Breast epithelium (tissue), 4 donors: ENCODE measurements at regions of chr20 and their contacts with region 1.

Region 1: DNA sequence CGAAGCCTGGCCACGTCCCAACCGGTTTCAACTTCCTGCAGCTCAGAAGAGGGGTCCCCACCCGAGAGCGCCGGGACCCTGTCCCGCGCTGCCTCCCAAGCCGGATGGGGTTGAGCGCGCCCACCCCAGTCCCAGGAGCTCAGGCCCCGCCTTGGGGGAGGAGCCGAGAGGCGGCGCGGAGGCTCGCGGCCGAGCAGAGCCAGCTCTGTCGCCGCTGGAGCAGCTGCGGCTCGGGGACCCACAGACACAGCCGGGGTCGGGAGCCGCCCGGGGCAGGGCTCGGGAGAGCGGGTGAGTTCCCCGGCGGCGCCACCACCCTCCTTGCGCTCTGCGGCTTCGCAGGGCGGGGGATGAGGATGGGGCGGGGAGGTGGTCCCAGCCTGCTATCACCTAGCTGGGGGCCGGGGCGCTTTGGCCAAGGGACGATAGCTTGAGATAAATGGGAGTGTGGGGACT is at the start of gene PPP1R16B:
- DNase-seq: peak in 1 of 2 donors; percentile 27
- H3K4me3 ChIP-seq: peak within 1 kb of the TSS; percentile 49 to 77 (median 63)
- H3K27ac ChIP-seq: peak within 1 kb of the TSS; percentile 53 to 75
- H3K4me1 ChIP-seq: peaks cover 0 to 9% of the 10 kb centered on the region in 2 donors
- H3K27me3 ChIP-seq: peaks cover 7 to 30% of the 10 kb centered on the region in 2 donors
- CTCF ChIP-seq: no peak
- POLR2A ChIP-seq: no peak
- total RNA-seq, gene PPP1R16B: 3.7 to 10.8 (median 8.2) TPM

Region 2: GRCh38 chr20:38790200-38791053 is 15.1 kb before region 1 on chr20:
- intact Hi-C with region 1: no loop called
- DNase-seq: no peak
- H3K4me3 ChIP-seq: no peak overlapping the region
- H3K27ac ChIP-seq: no peak overlapping the region
- H3K4me1 ChIP-seq: no peaks in the 10 kb centered on the region
- H3K27me3 ChIP-seq: no peaks in the 10 kb centered on the region
- CTCF ChIP-seq: peak; percentile 11 to 46 (median 28)
- POLR2A ChIP-seq: no peak

Region 3: GRCh38 chr20:38838326-38838725 is 32.8 kb after region 1 on chr20:
- intact Hi-C with region 1: loop called (anchors 1 kb)
- DNase-seq: no peak
- H3K4me3 ChIP-seq: no peak overlapping the region
- H3K27ac ChIP-seq: no peak overlapping the region
- H3K4me1 ChIP-seq: no peaks in the 10 kb centered on the region
- H3K27me3 ChIP-seq: no peaks in the 10 kb centered on the region
- CTCF ChIP-seq: no peak
- POLR2A ChIP-seq: no peak